Endothelial cell of umbilical vein (primary cell): ENCODE measurements at regions of chrX and their contacts with region 1.

Region 1: DNA sequence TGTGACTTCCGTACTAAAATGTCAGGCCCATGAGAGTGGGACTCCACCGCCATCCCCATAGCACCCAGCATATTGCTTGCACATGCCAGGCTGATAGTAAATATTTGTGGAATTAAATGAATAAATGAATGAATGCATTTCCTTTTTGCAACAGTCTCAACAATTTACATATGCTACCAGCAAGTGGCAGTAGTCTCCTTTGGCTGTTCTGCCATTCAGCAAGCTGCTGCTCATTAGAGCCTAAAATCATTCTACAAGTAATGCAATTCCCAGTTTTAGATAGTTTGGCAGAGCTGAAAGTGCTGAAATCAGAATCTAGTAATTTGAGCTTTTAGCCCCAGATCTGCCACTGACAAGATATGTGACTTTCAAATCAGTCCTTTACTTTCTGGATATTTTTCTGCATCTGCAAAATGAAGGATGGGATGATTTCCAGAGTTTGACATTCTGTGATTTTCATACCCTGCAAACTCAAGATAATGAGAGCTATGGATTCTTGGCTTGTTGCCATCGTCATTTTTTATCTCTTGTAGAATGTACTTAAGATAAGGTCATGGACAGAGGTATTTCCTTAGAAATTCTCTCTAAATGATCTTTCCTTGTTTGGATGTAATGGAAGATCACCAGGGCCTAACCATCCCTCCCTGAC is 35.7 kb upstream of the INTS6L start:
- DNase-seq: peak; percentile 46
- H3K4me3 ChIP-seq: no peak overlapping the region
- H3K27ac ChIP-seq: no peak overlapping the region
- H3K4me1 ChIP-seq: no peaks in the 10 kb centered on the region
- H3K27me3 ChIP-seq: no peaks in the 10 kb centered on the region
- CTCF ChIP-seq: peak; percentile 32 to 45
- POLR2A ChIP-seq: no peak

Region 2: DNA sequence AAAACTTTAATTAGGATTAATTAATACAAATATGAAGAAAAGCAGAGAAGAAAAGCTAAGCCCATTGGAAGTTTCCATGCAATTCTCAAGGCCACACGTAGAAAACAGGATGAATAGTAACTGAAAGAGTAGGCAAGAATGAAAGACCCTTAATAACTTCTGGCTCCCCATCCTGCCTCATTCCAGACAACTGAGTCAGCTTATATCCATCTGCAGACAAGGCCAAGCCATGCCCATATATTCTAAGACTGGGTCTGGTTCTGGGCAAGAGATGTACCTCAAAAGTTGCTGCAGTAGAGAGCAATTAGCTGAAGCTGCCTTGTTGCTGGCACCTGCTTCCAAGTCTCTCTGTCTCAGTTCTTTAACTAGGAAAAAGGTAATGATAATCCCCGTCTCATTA is 1743.5 kb before region 1 on chrX:
- CTCF ChIA-PET with region 1: no interaction called
- POLR2A ChIA-PET with region 1: no interaction called
- dilution Hi-C with region 1: no loop called
- intact Hi-C with region 1: no loop called
- DNase-seq: no peak
- H3K4me3 ChIP-seq: no peak overlapping the region
- H3K27ac ChIP-seq: no peak overlapping the region
- H3K4me1 ChIP-seq: no peaks in the 10 kb centered on the region
- H3K27me3 ChIP-seq: no peaks in the 10 kb centered on the region
- CTCF ChIP-seq: no peak
- POLR2A ChIP-seq: no peak

Region 3: DNA sequence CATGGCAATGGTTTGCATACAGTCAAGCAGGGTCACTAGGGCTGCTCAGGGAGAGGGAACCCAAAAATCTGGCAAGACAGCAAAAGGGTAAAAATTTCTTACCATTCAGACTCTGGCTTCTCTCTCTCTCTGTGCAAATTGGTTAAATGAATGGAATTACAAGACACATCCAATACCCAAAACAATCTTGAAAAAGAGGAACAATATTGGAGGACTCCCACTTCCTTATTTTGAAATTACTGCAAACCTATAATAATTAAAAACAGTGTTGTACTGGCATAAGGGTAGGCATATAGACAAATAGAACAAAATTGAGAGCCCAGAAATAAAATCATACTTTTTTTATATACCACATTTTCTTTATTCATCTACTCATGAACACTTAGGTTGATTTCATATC is 208.8 kb before region 1 on chrX:
- CTCF ChIA-PET with region 1: no interaction called
- POLR2A ChIA-PET with region 1: no interaction called
- dilution Hi-C with region 1: no loop called
- intact Hi-C with region 1: no loop called
- DNase-seq: no peak
- H3K4me3 ChIP-seq: no peak overlapping the region
- H3K27ac ChIP-seq: no peak overlapping the region
- H3K4me1 ChIP-seq: no peaks in the 10 kb centered on the region
- H3K27me3 ChIP-seq: no peaks in the 10 kb centered on the region
- CTCF ChIP-seq: no peak
- POLR2A ChIP-seq: no peak

Region 4: GRCh38 chrX:135572436-135572835 is 87.7 kb after region 1 on chrX:
- CTCF ChIA-PET with region 1: interaction called, 25 read pairs
- POLR2A ChIA-PET with region 1: no interaction called
- dilution Hi-C with region 1: no loop called
- intact Hi-C with region 1: loop called (anchors 1 kb)
- DNase-seq: no peak
- H3K4me3 ChIP-seq: no peak overlapping the region
- H3K27ac ChIP-seq: no peak overlapping the region
- H3K4me1 ChIP-seq: no peaks in the 10 kb centered on the region
- H3K27me3 ChIP-seq: no peaks in the 10 kb centered on the region
- CTCF ChIP-seq: peak; percentile 3 to 13
- POLR2A ChIP-seq: no peak

Region 5: DNA sequence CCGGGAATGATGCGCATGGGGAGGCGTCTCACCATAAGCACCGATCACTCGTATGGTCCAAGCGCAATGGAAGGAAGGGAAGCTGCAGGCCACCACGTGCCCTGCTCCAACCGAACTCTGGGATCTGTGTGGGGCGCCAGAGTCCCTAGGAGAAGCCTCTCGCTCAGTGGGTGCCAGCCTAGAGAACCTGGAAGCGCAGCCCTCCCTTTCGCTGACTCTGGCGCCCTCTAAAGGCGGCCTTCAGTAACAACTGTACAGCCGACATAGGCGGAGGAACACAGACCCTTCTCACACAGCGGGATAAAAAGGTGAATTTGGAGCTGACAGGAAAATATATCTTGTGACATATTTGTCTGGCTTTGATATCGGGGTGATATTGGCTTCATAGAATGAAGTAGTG is 111.7 kb after region 1 on chrX:
- CTCF ChIA-PET with region 1: interaction called, 12 read pairs
- POLR2A ChIA-PET with region 1: no interaction called
- dilution Hi-C with region 1: no loop called
- intact Hi-C with region 1: loop called (anchors 1 kb)
- DNase-seq: peak; percentile 1
- H3K4me3 ChIP-seq: no peak overlapping the region
- H3K27ac ChIP-seq: no peak overlapping the region
- H3K4me1 ChIP-seq: no peaks in the 10 kb centered on the region
- H3K27me3 ChIP-seq: no peaks in the 10 kb centered on the region
- CTCF ChIP-seq: peak; percentile 25 to 56
- POLR2A ChIP-seq: no peak

Region 6: DNA sequence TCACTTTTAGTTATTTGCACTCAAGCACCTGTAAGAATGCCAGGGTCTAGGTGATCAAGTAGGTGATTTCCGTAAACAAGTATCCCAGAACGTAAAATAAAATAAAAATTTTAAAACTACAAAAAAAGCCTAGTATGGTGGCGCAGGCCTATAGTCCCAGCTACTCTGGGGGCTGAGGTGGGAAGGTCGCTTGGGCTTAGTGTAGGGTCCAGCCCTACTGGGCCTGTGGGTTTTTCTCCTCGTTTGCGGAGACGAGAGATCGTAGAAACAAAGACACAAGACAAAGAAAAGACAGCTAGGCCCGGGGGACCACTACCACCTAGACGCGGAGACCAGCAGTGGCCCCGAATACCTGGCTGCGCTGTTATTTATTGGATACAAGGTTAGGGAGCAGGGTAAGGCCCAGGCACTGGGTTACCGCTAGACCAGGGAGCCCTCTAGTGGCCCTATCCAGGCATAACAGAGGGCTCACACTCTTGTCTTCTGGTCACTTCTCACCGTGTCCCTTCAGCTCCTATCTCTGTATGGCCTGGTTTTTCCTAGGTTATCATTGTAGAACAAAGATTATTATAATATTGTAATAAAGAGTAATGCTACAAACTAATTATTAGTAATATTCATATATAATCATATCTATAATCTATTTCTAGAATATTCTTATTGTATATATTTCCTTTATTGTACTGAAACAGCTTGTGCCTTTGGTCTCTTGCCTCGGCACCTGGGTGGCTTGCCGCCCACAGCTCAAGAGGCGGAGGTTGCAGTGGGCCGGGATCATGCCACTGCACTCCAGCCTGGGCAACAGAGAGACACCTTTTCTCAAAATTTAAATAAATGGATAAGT is 447.1 kb after region 1 on chrX:
- CTCF ChIA-PET with region 1: interaction called, 3 read pairs
- POLR2A ChIA-PET with region 1: no interaction called
- dilution Hi-C with region 1: no loop called
- intact Hi-C with region 1: loop called (anchors 2 kb)
- DNase-seq: peak; percentile 5
- H3K4me3 ChIP-seq: no peak overlapping the region
- H3K27ac ChIP-seq: no peak overlapping the region
- H3K4me1 ChIP-seq: no peaks in the 10 kb centered on the region
- H3K27me3 ChIP-seq: no peaks in the 10 kb centered on the region
- CTCF ChIP-seq: peak; percentile 33 to 63
- POLR2A ChIP-seq: no peak